ENCODE measurements at regions of chr7 and their contacts with region 1.

Region 1: GRCh38 chr7:102039709-102040108 is 222.3 kb downstream of the CUX1 start:
- DNase-seq: no peak

Region 2: DNA sequence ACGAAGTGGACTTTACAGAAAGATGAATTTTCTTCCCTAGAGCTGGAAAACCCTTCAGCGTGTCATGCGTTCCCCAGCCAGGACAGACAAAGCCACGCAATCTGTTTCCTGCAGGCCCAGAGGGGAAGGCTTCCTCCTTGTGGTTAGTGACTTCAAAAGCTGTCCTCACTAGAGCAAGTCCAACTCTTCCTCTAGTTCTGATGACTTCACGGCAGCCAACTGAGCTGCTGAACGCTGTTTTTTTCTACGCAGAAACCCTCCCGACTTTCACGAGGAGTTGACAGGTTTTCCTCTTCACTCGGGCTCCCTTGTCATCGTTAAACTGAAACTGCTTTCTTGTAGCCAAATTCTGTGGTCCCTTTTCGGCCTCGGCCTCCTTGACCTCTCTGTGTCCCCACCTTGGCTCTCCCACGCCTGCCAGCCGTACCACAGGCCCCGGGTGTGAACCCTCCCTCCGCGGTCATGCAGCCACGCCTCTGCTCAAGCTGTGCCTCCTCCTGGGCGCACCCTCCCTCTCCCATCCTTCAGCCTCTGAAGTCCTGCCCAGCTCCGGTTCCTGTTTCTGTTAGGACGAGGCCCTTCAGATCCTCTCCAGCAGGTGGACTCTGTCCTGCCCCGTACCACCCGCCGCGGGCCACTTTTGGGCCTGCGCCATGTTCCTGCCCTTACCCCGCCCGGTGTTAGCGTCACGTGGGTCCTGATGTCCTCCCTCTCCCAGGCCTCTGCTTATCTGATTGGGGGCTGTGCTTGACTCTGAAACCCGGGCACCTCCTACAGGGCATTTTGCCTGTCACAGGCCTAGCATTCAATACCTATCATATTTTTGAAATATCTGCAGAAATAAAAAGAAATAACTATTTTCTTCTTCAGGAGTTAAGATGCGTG is 183.0 kb before region 1 on chr7:
- intact Hi-C with region 1: loop called (anchors 2 kb)
- DNase-seq: peak; percentile 97

Region 3: GRCh38 chr7:101911800-101912715 is 127.7 kb before region 1 on chr7:
- intact Hi-C with region 1: no loop called
- DNase-seq: no peak

Region 4: DNA sequence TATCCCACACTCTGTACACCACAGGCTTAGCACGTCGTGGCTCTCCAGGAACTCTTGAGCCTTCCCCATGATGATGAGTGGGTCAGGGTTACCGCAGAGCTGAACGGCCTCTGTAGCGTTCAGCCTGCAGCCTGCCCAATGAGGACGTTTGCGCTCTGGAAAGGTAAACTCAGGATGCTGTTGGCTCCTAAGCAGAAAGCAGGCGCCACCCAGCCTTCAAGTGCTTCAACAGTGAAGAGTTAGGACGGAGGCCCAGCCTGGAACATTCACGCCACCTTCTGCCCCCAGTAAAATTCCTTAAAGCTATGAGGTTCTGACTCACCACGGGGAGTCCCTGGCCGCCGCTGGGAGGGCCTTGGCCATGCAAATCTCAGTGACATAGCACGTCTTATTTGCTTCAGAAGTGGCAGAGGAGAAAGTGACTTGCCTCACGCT is 85.4 kb after region 1 on chr7:
- intact Hi-C with region 1: no loop called
- DNase-seq: no peak

Measured in cardiac septum (tissue), 1 donor.